Lower lobe of right lung (tissue), 2 donors: ENCODE measurements at regions of chr2 and their contacts with region 1.

Region 1: DNA sequence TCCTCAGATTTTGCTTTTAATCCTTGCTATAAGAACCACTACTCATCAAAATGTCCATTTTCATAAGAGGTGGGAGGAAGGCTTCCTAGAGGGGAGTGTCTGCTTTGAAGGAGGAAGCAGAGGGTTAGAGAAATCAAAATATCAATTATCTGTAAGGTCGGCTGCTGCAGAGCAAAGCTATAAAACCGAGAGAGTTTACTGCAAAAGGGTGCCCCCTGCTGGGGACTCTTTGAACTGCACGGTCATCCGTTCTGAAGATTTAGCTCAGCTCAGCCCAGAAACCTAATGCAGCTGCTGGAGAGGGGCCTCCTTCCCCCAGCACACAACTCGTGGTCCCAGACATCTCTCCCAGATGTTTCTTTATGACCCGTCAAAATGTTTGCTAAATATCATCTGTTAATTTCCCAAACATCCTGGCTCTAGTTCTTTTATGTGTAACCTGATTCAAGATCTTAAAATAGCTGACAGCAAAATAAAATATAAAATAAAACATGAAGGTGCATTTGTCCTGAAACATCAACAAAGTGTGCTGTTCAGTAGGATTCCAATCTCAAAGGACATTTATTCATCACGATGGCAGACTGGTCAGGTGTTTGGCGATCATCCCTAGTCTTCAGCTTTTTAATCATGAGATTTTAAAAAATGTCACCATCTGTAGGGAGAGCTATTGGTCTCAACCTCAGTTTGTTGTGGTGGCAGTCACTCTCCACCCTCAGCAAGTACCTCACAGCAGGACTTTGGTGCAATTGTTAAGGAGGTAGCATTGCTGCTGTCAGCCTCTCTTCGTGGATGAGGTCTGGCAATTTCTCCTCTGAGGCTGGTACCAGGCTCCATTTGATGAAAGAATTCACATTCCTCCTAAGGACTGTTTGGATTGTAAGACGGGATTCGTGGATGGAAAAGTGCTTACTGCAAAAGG is 185.9 kb downstream of the MTX2 start:
- DNase-seq: peak; percentile 78
- ATAC-seq: peak; percentile 82 to 90
- H3K4me3 ChIP-seq: no peak overlapping the region
- H3K27ac ChIP-seq: no peak overlapping the region
- H3K4me1 ChIP-seq: no peaks in the 10 kb centered on the region
- H3K27me3 ChIP-seq: peaks cover 17% of the 10 kb centered on the region
- CTCF ChIP-seq: peak; percentile 97

Region 2: DNA sequence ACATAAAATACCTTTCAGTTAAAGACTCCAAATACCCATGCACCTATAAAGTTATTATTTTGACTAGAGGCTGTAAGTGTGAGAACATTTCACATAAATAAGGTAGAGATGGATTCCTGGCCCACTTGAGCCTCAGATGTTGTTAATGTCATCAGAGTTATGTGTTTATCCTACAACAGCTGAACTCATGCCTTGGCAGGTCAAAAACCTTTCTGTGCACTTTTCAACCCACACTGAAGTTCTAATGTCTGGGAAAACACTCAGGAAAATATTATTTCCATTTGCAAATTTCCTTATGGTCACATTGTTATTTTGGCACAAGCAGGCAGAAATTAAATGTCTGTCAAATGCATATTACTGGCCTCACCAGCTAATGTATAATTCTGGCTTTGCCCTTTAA is 662.3 kb before region 1 on chr2:
- intact Hi-C with region 1: no loop called
- DNase-seq: no peak
- ATAC-seq: no peak
- H3K4me3 ChIP-seq: no peak overlapping the region
- H3K27ac ChIP-seq: no peak overlapping the region
- H3K4me1 ChIP-seq: no peaks in the 10 kb centered on the region
- H3K27me3 ChIP-seq: no peaks in the 10 kb centered on the region
- CTCF ChIP-seq: no peak

Region 3: GRCh38 chr2:176140513-176141317 is 314.4 kb before region 1 on chr2:
- intact Hi-C with region 1: loop called (anchors 10 kb)
- DNase-seq: peak; percentile 70
- ATAC-seq: peak; percentile 91 to 94
- H3K4me3 ChIP-seq: peak overlapping the region; percentile 53
- H3K27ac ChIP-seq: no peak overlapping the region
- H3K4me1 ChIP-seq: peaks cover 25% of the 10 kb centered on the region
- H3K27me3 ChIP-seq: peaks cover 98% of the 10 kb centered on the region
- CTCF ChIP-seq: peak; percentile 89

Region 4: DNA sequence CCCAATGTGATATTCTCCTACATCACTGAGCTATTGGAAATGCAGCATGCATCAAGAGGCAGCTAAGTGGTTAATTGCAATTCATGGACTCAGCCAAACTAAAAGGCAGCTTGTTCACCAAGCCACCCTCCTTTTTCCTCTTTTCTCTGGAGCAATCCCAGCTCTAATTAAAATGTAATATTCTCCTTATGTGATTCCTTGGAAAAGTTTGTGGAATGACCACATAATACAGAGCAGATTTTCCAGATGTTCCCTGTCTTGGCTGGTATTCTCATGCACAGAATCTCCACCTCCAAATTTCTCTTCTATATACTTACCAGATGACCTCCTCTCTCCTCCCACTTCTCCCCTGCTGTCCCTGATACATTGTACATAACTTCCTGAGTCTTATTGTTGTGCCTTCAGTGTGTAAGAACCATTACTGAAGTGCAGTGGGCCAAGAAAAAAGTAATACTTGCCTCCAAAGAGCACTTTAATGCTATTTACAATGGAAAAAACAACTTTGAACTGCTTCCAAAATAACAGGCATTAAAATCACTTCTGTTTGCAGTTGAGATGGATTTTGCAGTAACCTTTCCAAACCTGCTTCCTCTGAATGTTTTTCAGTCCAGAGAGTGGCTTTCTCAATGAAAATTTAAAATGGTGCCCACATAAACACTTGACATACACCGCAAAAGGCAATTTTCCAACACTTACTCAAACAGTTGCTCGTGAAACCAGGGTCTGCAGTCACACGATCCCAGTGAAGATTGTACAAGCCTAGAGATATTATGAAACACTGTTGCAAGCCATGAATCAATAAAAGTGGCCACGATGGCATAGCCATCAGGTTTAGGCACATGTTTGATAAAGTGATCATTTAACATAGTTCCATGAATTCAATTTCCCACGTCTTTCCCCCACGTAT is 72.1 kb after region 1 on chr2:
- intact Hi-C with region 1: no loop called
- DNase-seq: no peak
- ATAC-seq: no peak
- H3K4me3 ChIP-seq: no peak overlapping the region
- H3K27ac ChIP-seq: no peak overlapping the region
- H3K4me1 ChIP-seq: peaks cover 10% of the 10 kb centered on the region
- H3K27me3 ChIP-seq: no peaks in the 10 kb centered on the region
- CTCF ChIP-seq: no peak

Region 5: DNA sequence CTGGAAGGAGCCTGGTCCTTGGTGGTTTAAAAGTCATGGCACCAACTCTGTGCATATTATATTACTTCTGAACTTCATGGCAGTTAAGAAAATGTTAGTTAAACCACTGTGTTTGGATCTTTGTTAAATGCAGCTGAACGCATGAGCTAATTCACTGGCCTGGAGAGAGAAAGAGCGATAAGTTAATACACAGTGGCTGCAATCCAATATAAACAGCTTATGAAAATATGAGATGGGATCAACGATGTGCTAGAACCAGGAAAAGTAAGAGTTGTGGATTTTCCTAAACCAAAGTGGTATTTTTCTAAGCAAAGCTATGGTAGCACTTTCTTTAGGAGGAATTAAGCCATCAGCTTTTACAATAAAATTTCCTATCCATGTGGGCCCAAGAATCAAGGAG is 140.8 kb after region 1 on chr2:
- intact Hi-C with region 1: no loop called
- DNase-seq: no peak
- ATAC-seq: no peak
- H3K4me3 ChIP-seq: no peak overlapping the region
- H3K27ac ChIP-seq: no peak overlapping the region
- H3K4me1 ChIP-seq: no peaks in the 10 kb centered on the region
- H3K27me3 ChIP-seq: no peaks in the 10 kb centered on the region
- CTCF ChIP-seq: no peak